Calu3 (cell line): ENCODE measurements at regions of chr5 and their contacts with region 1.

Region 1: DNA sequence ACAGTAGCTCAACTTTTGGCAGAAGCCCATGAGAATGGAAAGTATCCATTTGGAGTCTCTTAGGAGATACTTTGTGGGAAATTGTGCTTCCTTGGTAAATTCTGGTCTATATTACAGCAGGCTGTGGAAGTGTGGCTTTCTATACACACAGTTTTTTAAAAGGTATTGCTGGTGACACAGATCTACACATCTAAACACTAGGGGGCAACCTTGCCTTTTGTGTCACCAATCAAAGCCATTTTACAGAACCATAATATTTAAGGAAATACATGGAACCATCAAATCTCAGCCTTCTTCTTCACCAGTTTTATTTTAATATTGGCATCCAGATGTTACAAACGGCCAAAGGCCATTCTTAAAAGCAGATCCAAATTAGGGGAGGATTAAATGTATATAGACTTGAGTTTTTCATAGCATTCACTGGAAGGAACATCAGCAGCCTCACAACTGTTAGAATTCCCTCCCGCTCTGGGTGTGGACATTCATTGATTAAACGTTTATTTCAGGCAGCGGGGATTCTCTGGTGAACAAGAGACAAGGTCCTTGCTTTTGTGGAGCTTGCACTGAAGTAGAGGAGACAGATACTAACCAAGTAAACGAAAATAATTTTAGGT is 132.4 kb upstream of the EPB41L4A start:
- DNase-seq: peak; percentile 64
- H3K4me3 Mint-ChIP-seq: no peak overlapping the region
- H3K27ac Mint-ChIP-seq: no peak overlapping the region
- H3K4me1 Mint-ChIP-seq: peaks cover 23% of the 10 kb centered on the region
- H3K27me3 Mint-ChIP-seq: no peaks in the 10 kb centered on the region
- CTCF ChIP-seq: peak; percentile 61

Region 2: GRCh38 chr5:112604732-112605630 is 53.5 kb after region 1 on chr5:
- CTCF ChIA-PET with region 1: no interaction called
- intact Hi-C with region 1: loop called (anchors 5 kb)
- DNase-seq: peak; percentile 42
- H3K4me3 Mint-ChIP-seq: no peak overlapping the region
- H3K27ac Mint-ChIP-seq: no peak overlapping the region
- H3K4me1 Mint-ChIP-seq: peaks cover 10% of the 10 kb centered on the region
- H3K27me3 Mint-ChIP-seq: peaks cover 9% of the 10 kb centered on the region
- CTCF ChIP-seq: peak; percentile 22

Region 3: DNA sequence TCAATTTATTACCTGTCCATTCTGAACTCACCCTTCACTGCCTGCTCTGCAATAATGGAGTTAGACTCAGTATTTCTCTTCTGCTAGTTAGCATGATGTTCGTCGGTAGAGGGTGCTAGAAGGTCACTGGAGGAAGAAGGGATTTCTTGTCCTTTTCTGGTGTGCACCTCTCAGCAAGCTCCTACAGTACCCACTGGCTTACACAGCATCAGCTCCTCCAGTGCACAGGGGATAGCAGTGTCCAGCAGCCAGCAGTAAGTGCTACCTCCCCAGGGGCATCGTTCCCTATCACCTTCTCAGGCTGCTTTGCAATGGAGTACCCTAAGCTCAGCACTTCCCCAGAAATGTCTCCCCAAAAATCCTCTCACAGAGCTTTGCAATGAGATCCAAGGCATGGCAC is 140.2 kb after region 1 on chr5:
- CTCF ChIA-PET with region 1: interaction called, 4 read pairs
- intact Hi-C with region 1: loop called (anchors 2 kb)
- DNase-seq: peak; percentile 59
- H3K4me3 Mint-ChIP-seq: no peak overlapping the region
- H3K27ac Mint-ChIP-seq: no peak overlapping the region
- H3K4me1 Mint-ChIP-seq: peaks cover 8% of the 10 kb centered on the region
- H3K27me3 Mint-ChIP-seq: peaks cover 49% of the 10 kb centered on the region
- CTCF ChIP-seq: peak; percentile 38

Region 4: DNA sequence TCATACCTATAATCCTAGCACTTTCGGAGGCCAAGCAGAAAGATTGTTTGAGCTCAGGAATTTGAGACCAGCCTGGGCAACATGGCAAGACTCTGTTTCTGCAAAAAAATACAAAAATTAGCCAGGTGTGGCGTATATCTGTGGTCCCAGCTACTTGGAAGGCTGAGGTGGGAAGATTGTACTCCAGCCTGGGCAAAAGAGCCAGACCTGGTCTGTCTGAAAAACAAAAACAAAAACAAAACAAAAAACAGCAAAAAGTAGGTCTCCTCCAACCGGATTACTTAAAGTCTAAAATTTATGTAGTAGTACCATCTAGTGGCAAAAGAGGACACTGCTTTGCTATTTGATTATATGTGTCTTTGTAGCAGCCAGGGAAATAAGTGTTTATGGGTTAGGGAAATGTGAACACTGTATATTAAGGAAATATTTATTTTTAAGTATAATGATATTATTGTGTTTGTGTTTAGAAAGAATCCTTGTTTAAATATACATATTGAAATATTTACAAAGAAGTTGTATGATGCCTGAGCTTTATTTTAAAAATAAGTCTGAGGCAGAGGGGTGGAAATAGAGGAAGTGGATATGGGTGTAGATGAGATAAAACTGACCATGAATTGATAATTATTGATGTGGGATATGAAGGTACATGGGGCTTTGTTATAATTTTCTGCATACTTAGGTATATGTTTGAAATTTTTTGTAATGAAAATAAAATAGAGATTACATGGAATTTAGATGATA is 206.1 kb after region 1 on chr5:
- CTCF ChIA-PET with region 1: interaction called, 9 read pairs
- intact Hi-C with region 1: loop called (anchors 1 kb)
- DNase-seq: peak; percentile 11
- H3K4me3 Mint-ChIP-seq: no peak overlapping the region
- H3K27ac Mint-ChIP-seq: no peak overlapping the region
- H3K4me1 Mint-ChIP-seq: peaks cover 7% of the 10 kb centered on the region
- H3K27me3 Mint-ChIP-seq: no peaks in the 10 kb centered on the region
- CTCF ChIP-seq: peak; percentile 61

Region 5: GRCh38 chr5:112848116-112848811 is 296.7 kb after region 1 on chr5:
- CTCF ChIA-PET with region 1: interaction called, 14 read pairs
- intact Hi-C with region 1: loop called (anchors 2 kb)
- DNase-seq: peak; percentile 21
- H3K4me3 Mint-ChIP-seq: no peak overlapping the region
- H3K27ac Mint-ChIP-seq: no peak overlapping the region
- H3K4me1 Mint-ChIP-seq: no peaks in the 10 kb centered on the region
- H3K27me3 Mint-ChIP-seq: no peaks in the 10 kb centered on the region
- CTCF ChIP-seq: peak; percentile 64